Esophagus squamous epithelium (tissue), 5 donors: ENCODE measurements at regions of chr10 and their contacts with region 1.

Region 1: GRCh38 chr10:104121520-104122224 is at the start of gene SFR1:
- DNase-seq: peak; percentile 92
- H3K4me3 ChIP-seq: peak within 1 kb of the TSS; percentile 65 to 77 (median 72)
- H3K27ac ChIP-seq: peak within 1 kb of the TSS; percentile 96 to 100 (median 98)
- H3K4me1 ChIP-seq: peaks cover 8 to 58% (median 25%) of the 10 kb centered on the region in 3 donors
- H3K27me3 ChIP-seq: no peaks in the 10 kb centered on the region
- CTCF ChIP-seq: peak; percentile 35 to 77 (median 66)
- POLR2A ChIP-seq: peak in 3 of 4 donors; percentile 59 to 90 (median 87)
- total RNA-seq, gene SFR1: 2.7 to 9.3 (median 6.3) TPM

Region 2: GRCh38 chr10:103888113-103888841 is 233.4 kb before region 1 on chr10:
- intact Hi-C with region 1: loop called (anchors 5 kb)
- DNase-seq: no peak
- H3K4me3 ChIP-seq: no peak overlapping the region
- H3K27ac ChIP-seq: peak overlapping the region; percentile 82 to 90 (median 86)
- H3K4me1 ChIP-seq: peaks cover 18 to 84% (median 25%) of the 10 kb centered on the region in 3 donors
- H3K27me3 ChIP-seq: no peaks in the 10 kb centered on the region
- CTCF ChIP-seq: peak; percentile 67 to 97 (median 88)
- POLR2A ChIP-seq: no peak

Region 3: GRCh38 chr10:104268716-104269645 is 147.3 kb after region 1 on chr10 and contains the start of gene GSTO2:
- intact Hi-C with region 1: loop called (anchors 10 kb)
- DNase-seq: peak; percentile 94
- H3K4me3 ChIP-seq: peak within 1 kb of the TSS; percentile 75 to 96 (median 81)
- H3K27ac ChIP-seq: peak within 1 kb of the TSS; percentile 85 to 95 (median 94)
- H3K4me1 ChIP-seq: peaks cover 0 to 25% (median 12%) of the 10 kb centered on the region in 3 donors
- H3K27me3 ChIP-seq: no peaks in the 10 kb centered on the region
- CTCF ChIP-seq: peak in 2 of 6 experiments; percentile 5 to 8
- POLR2A ChIP-seq: peak in 2 of 4 donors; percentile 63 to 71
- total RNA-seq, gene GSTO2: 6.1 to 20.6 (median 13.8) TPM